GM10248 (cell line): ENCODE measurements at regions of chr3 and their contacts with region 1.

Region 1: GRCh38 chr3:118628704-118629341 is 405.8 kb downstream of the IGSF11 start:
- DNase-seq: peak; percentile 56
- CTCF ChIP-seq: peak; percentile 75

Region 2: DNA sequence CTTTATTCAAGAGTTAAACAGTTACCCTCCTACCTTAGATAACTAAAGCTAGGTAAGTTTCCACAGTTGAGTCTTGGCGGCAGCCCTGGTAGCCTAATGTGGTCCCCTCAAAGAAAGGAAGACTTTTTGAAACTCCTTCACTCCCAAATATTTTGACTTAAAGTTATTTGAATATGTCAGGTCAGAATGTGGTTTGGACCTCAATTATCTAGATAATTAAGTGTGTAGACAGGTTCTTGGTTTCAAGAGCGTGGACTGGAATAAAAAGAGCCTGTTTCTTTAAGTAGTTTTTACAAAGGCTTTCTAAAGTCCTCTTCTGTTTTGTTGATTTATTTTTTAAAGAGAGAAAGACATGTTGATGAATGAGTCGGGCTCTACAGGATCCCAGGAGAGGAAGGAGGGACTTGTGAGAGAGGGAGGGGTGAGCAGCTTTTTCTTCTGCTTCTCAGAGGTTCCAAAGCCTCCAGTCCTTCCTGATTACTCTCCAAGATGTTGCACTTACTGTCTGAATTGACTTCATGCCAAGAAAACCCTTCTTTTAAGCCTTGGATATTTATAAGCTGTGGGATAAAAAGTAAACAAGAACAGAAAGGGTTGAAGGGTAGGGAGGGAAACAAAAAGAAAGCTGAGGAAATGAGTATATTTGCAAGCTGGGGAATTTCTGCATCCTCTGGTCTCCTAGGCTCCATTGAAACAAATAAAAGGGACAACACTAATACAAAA is 51.6 kb before region 1 on chr3:
- CTCF ChIA-PET with region 1: no interaction called
- POLR2A ChIA-PET with region 1: no interaction called
- DNase-seq: no peak
- CTCF ChIP-seq: no peak

Region 3: DNA sequence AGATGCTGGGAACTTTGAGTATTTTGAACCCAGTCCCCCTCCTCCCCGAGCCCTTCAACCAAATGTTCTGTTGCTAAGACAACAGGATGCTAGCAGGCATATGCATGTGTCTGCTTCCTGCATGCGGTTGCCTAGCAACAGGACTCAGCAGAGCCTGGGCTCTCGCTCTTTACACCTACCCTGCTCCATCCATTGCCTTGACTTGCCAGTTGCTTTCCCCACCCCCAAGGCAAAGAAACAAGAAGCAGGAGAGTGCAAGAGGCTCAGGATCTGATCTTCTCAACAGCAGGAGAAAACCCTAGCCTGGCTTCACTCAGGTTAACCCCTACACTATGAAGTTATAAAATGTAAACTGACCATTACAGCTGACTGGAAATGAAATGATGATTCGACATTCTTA is 12.8 kb after region 1 on chr3:
- CTCF ChIA-PET with region 1: interaction called, 45 read pairs
- POLR2A ChIA-PET with region 1: no interaction called
- DNase-seq: no peak
- CTCF ChIP-seq: no peak